ENCODE measurements at regions of chr11 and their contacts with region 1.

Region 1: GRCh38 chr11:35822815-35823495 is 120.9 kb upstream of the LDLRAD3 start:
- DNase-seq: no peak
- ATAC-seq: no peak
- H3K4me3 Mint-ChIP-seq: no peak overlapping the region
- H3K27ac Mint-ChIP-seq: no peak overlapping the region
- H3K4me1 Mint-ChIP-seq: peaks cover 9% of the 10 kb centered on the region
- H3K27me3 Mint-ChIP-seq: no peaks in the 10 kb centered on the region
- CTCF ChIP-seq: no peak

Region 2: DNA sequence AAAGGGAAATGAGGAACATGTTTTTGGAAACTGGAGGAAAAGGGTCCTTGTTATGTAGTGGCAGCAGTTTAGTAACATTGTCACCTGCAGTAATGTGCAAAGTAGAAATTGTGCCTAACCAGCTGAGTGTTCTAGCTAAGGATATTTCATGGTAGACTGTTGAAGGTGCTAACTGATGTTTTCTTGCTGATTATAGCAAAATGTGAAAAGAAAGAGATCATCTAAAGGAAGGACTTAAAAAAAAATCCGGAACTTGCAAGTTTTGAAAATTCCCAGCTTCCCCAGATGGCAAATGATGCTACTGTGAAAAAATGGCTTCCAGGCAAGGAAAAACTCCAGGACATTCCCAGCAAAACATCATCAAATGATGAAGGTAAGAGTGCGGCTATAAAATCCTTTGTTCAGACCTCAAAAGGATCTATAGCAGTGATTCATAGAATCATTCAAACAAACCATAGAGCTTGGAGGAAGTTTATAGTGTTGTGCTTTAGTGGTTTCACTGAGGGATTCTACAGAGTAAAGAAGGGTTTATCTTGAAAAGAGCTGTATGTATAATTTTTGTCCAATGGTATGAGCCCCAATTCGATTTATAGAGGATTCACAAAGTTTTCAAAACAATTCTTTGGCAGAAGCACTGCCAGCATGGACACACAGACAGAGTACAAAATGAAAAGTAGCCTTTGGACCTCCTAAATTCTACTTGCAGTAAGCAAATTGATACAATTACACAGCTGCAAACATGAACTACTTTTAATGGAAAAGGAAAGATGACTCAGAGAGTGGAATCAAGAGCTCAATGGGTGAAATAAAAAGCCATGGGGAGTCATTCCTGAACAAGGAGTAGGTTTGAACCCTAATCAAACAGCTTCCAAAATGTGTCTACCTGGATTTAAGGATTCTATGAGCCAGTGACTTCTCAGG is 164.7 kb before region 1 on chr11:
- CTCF ChIA-PET with region 1: interaction called, 11 read pairs
- POLR2A ChIA-PET with region 1: no interaction called
- intact Hi-C with region 1: no loop called
- DNase-seq: no peak
- ATAC-seq: no peak
- H3K4me3 Mint-ChIP-seq: no peak overlapping the region
- H3K27ac Mint-ChIP-seq: no peak overlapping the region
- H3K4me1 Mint-ChIP-seq: peaks cover 11% of the 10 kb centered on the region
- H3K27me3 Mint-ChIP-seq: peaks cover 13% of the 10 kb centered on the region
- CTCF ChIP-seq: no peak

Region 3: DNA sequence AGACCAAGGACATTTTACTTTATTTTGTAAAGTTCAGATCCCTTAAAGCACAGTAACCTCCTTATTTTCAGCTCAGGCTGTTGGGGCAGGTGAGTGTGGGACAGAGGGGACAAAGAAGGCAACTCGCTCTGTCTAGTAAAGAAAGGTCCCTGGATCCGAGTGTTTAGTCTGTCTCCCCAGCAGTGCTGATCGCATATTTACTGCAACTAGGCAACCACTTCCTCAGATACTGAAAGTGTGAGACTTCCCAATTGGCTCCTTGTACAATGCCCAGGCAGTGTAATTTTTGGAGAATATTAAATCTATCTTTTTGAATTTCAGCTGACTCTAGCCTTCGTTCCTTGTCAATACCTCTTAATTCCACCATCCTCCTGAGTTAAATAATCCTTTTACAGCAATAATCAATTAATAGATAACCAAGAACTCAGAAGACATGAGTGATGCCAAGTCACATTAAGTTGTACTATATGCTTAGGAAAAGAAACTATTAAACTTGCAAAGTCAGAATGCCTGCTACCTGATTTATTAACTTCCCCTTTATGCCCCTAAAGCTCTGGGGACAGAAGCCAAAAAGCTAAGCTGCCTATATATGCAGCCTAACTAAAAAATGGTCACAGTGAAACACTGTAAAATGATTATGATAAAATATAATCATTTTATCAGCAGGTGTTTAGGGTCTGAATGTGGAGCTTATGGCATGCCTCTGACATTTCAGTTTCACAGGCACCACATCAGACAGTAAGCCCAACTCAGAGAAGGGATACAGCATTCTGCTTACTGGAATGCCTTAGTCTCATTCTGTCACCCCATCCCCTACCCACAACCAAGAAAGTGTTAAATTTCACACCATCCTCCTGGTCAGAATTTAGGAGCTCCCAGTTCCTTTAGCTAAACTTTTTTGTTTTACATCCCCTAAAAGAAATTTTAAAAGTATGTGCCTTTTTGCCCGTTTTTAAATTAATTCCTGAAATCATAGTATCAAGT is 21.7 kb before region 1 on chr11:
- CTCF ChIA-PET with region 1: interaction called, 29 read pairs
- POLR2A ChIA-PET with region 1: interaction called, 3 read pairs
- intact Hi-C with region 1: no loop called
- DNase-seq: no peak
- ATAC-seq: no peak
- H3K4me3 Mint-ChIP-seq: no peak overlapping the region
- H3K27ac Mint-ChIP-seq: no peak overlapping the region
- H3K4me1 Mint-ChIP-seq: peaks cover 7% of the 10 kb centered on the region
- H3K27me3 Mint-ChIP-seq: no peaks in the 10 kb centered on the region
- CTCF ChIP-seq: no peak

Region 4: GRCh38 chr11:35839368-35840161 is 16.6 kb after region 1 on chr11:
- CTCF ChIA-PET with region 1: interaction called, 10 read pairs
- POLR2A ChIA-PET with region 1: no interaction called
- intact Hi-C with region 1: no loop called
- DNase-seq: no peak
- ATAC-seq: no peak
- H3K4me3 Mint-ChIP-seq: no peak overlapping the region
- H3K27ac Mint-ChIP-seq: no peak overlapping the region
- H3K4me1 Mint-ChIP-seq: no peaks in the 10 kb centered on the region
- H3K27me3 Mint-ChIP-seq: peaks cover 7% of the 10 kb centered on the region
- CTCF ChIP-seq: no peak

Measured in activated CD8-positive, alpha-beta T cell treated with anti-CD3 and anti-CD28 coated beads for 36 hours (primary cell).